ENCODE measurements at regions of chr5 and their contacts with region 1.

Region 1: DNA sequence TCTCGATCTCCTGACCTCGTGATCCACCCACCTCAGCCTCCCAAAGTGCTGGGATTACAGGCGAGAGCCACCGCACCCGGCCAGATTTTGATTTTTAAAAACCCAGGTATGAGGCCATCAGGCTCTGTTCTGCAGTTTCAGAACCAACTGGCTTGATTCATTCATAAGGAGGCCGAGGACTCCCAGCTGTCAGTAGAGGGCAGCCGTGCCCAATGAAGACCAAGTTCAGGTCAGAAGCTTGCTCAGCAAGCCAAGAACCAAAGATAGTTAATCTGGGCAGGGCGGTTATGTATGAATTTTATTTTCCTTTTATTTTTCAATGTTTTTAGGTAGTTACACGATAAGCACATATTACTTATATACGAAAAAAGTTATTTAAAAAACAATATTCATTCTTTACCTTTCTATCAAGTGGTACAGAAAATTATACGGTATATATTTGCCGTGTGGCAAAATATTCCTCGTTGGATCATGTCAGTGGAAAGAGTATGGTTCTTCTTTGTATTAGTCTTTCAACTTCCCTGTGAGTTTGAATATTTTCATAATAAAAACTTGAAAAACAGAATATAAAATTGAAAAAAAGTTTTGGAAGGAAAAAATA is 18.0 kb downstream of the MGAT1 start:
- DNase-seq: peak; percentile 54 to 85 (median 63)
- ATAC-seq: peak; percentile 72
- H3K4me3 ChIP-seq: no peak overlapping the region
- H3K27ac ChIP-seq: no peak overlapping the region
- H3K4me1 ChIP-seq: peaks cover 38% of the 10 kb centered on the region in 2 experiments; a peak in 4 of 5 replicates
- H3K27me3 ChIP-seq: no peaks in the 10 kb centered on the region
- CTCF ChIP-seq: peak; percentile 75 to 83 (median 76)
- EP300 ChIP-seq: no peak
- POLR2A ChIP-seq: no peak
- RAD21 ChIP-seq: peak; percentile 64 to 83

Region 2: GRCh38 chr5:180673371-180674089 is 111.1 kb before region 1 on chr5:
- CTCF ChIA-PET with region 1: no interaction called
- POLR2A ChIA-PET with region 1: no interaction called
- in situ Hi-C with region 1: no loop called
- intact Hi-C with region 1: no loop called
- DNase-seq: peak in 1 of 4 experiments; percentile 28
- ATAC-seq: peak; percentile 74
- H3K4me3 ChIP-seq: no peak overlapping the region
- H3K27ac ChIP-seq: no peak overlapping the region
- H3K4me1 ChIP-seq: peaks cover 16 to 18% of the 10 kb centered on the region in 2 experiments
- H3K27me3 ChIP-seq: peaks cover 7 to 31% of the 10 kb centered on the region in 2 experiments; a peak in 4 of 5 replicates
- CTCF ChIP-seq: peak; percentile 25 to 63 (median 55); a peak in 5 of 6 replicates
- EP300 ChIP-seq: no peak
- POLR2A ChIP-seq: no peak
- RAD21 ChIP-seq: peak in 1 of 2 experiments; percentile 53; a peak in 2 of 4 replicates

Region 3: DNA sequence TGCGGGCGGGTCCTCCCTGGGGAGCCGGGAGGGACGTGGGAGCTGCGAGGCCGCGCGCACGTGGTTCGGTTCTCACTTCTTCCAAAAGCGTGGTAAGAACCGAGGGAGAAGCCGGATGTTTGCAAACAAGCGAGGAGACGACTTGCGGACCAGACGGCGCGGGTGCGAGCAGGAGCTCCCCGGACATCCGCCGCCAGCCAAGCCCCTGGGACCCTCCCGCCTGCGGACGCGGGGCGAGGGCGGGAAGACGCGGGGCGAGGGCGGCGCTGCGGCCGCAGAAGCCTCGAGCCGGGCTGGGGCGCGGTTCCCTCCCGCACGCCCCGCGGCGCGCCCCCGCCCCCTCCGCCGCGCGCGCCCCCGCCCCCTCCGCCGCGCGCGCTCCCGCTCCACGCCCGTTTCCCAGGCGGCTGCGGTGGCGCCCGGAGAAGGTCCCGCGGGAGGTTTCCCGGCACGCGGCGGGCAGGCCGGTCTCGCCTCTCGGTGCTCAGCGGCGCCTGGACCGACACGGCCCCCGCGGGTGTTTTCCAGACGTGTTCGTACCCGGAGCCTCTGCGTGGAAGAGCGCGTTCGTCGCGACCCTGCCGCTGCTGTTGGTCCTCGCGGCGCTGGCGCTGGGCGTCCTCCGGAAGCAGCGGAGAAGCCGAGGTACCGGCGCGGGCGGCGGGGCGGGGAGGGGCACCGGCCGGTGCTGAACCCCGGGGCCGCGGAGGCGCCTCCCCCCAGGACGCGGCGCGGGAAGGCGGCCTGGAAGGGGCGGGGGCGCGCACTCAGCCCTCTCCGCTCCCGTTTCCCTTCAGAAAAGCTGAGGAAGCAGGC is 268.3 kb after region 1 on chr5:
- CTCF ChIA-PET with region 1: no interaction called
- POLR2A ChIA-PET with region 1: no interaction called
- in situ Hi-C with region 1: no loop called
- intact Hi-C with region 1: loop called (anchors 5 kb)
- DNase-seq: peak; percentile 81 to 94 (median 93)
- ATAC-seq: peak; percentile 63
- H3K4me3 ChIP-seq: peak overlapping the region; percentile 84
- H3K27ac ChIP-seq: peak overlapping the region; percentile 89
- H3K4me1 ChIP-seq: peaks cover 38 to 41% of the 10 kb centered on the region in 2 experiments
- H3K27me3 ChIP-seq: no peaks in the 10 kb centered on the region
- CTCF ChIP-seq: no peak
- EP300 ChIP-seq: no peak
- POLR2A ChIP-seq: peak; percentile 73
- RAD21 ChIP-seq: no peak